Activated CD8-positive, alpha-beta T cell treated with anti-CD3 and anti-CD28 coated beads for 36 hours (primary cell): ENCODE measurements at regions of chr9 and their contacts with region 1.

Region 1: GRCh38 chr9:89455356-89455824 is 42.5 kb downstream of the SEMA4D start:
- DNase-seq: peak; percentile 55
- ATAC-seq: peak; percentile 10
- H3K4me3 Mint-ChIP-seq: peak overlapping the region; percentile 62
- H3K27ac Mint-ChIP-seq: peak overlapping the region; percentile 95
- H3K4me1 Mint-ChIP-seq: peaks cover 94% of the 10 kb centered on the region
- H3K27me3 Mint-ChIP-seq: no peaks in the 10 kb centered on the region
- CTCF ChIP-seq: no peak

Region 2: DNA sequence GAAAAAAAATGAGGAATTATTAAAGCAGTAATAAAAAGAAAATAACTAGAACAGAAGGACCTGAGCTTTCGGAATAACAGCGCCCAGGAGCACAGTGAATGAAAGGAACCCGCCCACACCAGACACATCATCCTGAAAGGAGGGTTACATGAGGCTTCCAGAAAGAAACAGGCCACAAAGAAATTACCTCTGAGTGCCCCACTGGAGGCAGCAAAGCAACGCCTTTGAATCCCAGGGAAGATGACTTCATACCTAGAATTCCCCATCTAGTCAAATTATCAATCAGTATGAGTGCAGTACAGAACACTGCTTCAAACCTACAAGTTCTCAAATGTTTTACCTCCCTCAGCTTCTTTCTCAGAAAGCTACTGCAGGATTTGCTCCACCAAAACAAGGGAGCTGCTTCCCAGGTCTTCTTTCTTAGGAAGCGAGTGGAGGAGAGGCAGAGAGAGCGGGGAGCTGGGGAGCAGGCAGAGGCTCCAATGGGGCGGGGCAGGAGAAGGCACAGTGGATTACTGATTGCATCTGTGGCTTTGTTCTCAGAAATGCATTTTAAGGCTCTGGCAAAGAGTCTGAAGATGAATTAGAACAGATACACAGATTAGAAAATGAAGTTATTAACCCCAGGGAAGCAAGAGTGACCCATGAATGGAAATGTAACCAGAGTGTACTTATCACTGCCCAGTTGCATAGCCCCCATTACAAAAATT is 44.6 kb before region 1 on chr9:
- CTCF ChIA-PET with region 1: interaction called, 12 read pairs
- POLR2A ChIA-PET with region 1: interaction called, 3 read pairs
- intact Hi-C with region 1: no loop called
- DNase-seq: peak; percentile 85
- ATAC-seq: peak; percentile 70
- H3K4me3 Mint-ChIP-seq: peak overlapping the region; percentile 40
- H3K27ac Mint-ChIP-seq: peak overlapping the region; percentile 95
- H3K4me1 Mint-ChIP-seq: peaks cover 95% of the 10 kb centered on the region
- H3K27me3 Mint-ChIP-seq: no peaks in the 10 kb centered on the region
- CTCF ChIP-seq: peak; percentile 20

Region 3: DNA sequence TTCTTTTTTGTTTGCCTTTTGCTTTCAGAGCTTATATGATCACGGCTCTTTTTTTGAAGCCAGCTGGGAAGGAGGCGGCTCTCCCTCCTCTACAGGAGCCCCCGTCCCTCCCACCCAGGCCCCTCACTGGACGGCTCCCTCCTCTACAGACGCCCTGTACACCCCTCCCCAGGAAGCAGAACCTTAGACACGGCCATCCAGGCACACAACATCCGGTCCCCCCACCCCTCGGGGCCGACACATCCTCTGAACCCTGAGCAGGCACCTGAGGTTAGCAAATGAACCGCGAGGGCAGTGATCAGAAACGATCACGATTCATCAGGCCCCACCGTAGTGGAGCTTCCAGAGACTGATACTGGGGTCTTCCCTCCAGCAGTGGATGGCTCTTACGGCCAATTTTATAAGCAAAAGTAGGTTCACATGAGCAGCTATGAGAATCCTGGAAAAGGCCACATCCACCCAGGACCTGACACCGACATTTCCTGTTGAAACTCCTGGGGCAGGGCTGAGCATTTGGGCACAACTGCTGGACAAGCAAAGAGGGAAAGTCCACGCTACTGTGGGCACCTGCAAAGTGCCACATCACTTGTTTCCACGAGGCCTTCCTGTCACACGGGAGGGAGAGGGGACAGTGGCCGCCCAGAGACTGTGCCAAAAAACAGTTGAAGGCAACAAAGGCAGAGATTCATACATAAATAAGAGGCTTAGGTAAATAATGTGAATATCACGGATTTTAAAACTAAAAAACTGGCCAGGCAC is 36.3 kb before region 1 on chr9:
- CTCF ChIA-PET with region 1: interaction called, 4 read pairs
- POLR2A ChIA-PET with region 1: interaction called, 33 read pairs
- intact Hi-C with region 1: no loop called
- DNase-seq: peak; percentile 92
- ATAC-seq: peak; percentile 52
- H3K4me3 Mint-ChIP-seq: peak overlapping the region; percentile 79
- H3K27ac Mint-ChIP-seq: peak overlapping the region; percentile 98
- H3K4me1 Mint-ChIP-seq: peaks cover 97% of the 10 kb centered on the region
- H3K27me3 Mint-ChIP-seq: no peaks in the 10 kb centered on the region
- CTCF ChIP-seq: no peak

Region 4: GRCh38 chr9:89442981-89443814 is 12.2 kb before region 1 on chr9:
- CTCF ChIA-PET with region 1: interaction called, 10 read pairs
- POLR2A ChIA-PET with region 1: interaction called, 16 read pairs
- intact Hi-C with region 1: no loop called
- DNase-seq: no peak
- ATAC-seq: no peak
- H3K4me3 Mint-ChIP-seq: no peak overlapping the region
- H3K27ac Mint-ChIP-seq: peak overlapping the region; percentile 93
- H3K4me1 Mint-ChIP-seq: peaks cover 90% of the 10 kb centered on the region
- H3K27me3 Mint-ChIP-seq: no peaks in the 10 kb centered on the region
- CTCF ChIP-seq: no peak

Region 5: DNA sequence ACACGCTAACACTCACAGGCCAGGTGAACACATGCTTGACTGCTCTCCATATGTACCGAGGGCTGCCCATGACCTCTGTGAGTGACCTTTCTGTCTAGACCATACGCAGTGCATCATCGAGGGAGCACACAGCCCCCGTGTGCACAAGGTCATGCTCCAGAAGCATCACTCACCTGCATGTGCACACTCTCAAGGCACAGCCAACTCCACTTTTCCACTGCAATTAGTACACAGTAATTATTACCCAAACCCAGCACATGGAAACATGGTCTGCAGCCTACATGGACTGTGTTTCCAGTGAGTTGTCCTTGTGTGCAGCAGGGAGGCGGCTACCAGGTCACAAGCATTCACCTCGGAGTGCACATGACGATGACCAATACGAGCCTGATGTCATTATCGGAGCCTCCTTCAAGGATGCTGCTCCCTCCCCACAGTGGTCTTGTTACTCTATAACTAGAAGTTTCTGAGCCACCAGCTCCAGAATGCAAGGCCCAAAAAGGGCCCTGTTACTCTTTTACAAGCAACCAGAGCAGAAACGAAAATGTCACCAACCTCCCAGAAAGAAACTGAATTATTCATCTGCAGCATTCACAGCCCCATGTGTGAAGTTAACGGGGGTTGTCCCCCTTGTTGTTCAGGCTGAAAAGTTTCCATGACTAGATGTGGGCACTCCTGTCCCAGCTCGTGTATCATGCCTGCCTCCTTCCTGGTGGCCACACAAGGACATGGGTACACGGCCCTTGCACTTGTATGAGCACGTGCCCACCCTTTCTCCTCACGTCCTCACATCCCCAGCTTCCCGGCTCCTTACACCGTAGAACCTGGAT is 11.3 kb after region 1 on chr9:
- CTCF ChIA-PET with region 1: interaction called, 7 read pairs
- POLR2A ChIA-PET with region 1: interaction called, 10 read pairs
- intact Hi-C with region 1: no loop called
- DNase-seq: peak; percentile 84
- ATAC-seq: peak; percentile 70
- H3K4me3 Mint-ChIP-seq: peak overlapping the region; percentile 68
- H3K27ac Mint-ChIP-seq: peak overlapping the region; percentile 95
- H3K4me1 Mint-ChIP-seq: peaks cover 92% of the 10 kb centered on the region
- H3K27me3 Mint-ChIP-seq: no peaks in the 10 kb centered on the region
- CTCF ChIP-seq: no peak